Posterior cingulate gyrus (tissue), 11 donors: ENCODE measurements at regions of chr15 and their contacts with region 1.

Region 1: DNA sequence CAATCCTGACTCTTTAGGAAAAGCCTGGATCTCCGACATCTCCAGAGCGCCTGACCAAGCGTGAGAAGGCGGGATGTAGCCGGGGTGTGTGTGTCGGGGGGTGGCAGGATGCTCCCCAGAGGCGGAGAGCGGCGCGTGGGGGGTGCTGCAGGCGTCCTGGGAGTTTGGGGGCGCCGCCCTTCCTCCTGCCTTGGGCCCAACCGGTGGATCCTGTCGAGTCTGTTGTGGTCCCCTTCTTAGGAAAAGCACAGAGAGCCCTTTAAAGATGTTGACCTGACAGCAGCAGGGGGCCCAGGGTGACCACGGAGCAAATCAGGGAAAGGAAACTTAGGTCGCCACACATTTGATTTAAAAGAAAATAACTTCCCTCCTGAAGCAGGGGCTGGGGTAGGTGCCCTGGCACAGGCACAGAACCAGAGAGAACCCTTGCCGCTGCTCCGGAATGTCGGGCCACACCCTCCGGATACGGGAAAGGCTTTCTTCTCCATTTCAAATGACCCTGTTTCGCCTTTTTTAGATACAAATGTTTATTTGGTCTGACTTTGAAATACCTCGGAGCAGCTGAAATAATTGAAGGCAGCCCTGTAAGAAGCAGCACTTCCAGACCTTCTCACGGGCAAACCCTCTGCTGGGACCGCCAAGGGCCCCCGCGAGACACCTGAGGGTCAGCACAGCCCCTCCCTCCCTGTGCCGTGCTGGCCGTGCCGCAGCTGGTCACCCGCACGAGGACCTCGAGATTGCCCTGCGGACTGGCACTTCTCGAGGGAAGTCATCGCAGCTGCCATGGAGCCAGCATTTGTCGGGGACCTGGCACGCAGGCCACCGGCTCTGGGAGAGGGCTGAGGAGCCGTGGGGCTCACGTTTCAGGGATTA is 102.9 kb upstream of the KLF13 start:
- DNase-seq: peak in 3 of 10 donors; percentile 25 to 78 (median 30)

Region 2: DNA sequence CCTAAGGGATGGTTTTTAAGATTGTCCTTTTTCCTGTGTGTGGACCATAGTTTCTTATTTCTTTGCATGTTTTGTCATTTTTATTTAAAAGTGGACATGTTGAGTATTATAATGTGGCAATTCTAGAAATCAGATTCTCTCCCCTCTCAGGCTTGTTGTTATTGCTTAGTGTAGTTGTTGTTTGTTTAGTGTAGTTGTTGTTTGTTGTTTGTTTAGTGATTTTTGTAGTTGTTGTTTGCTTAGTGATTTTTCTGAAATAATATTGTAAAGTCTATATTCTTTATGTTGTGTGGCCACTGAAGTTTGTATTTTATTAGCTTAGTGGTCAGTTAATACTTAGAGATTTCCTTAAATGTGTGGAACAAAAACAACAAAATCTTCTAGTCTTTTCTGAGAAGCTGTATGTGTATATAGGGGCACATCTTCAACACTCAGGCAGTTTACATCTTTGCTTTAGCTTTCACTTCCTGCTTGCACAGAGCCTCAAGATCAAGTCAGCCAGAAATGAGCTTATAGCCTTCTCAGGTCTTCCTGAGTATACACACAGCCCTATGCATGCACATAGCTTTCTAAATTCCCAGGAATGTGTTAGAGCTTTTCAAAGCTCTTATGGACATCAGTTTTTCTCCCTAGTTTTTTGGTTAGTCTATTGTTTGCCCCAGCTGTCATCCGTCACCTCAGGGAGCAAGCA is 210.0 kb before region 1 on chr15:
- intact Hi-C with region 1: no loop called
- DNase-seq: no peak

Region 3: GRCh38 chr15:31263751-31264558 is 40.2 kb after region 1 on chr15:
- intact Hi-C with region 1: loop called (anchors 5 kb)
- DNase-seq: peak in 8 of 10 donors; percentile 41 to 92 (median 55)